Activated B cell treated with CpG ODN at 0.5 μM for 24 hours (primary cell): ENCODE measurements at regions of chr14 and their contacts with region 1.

Region 1: GRCh38 chr14:22886500-22887259 is 3.7 kb downstream of the REM2 start:
- DNase-seq: peak; percentile 71
- ATAC-seq: peak; percentile 55
- H3K4me3 Mint-ChIP-seq: peak overlapping the region; percentile 90
- H3K27ac Mint-ChIP-seq: peak overlapping the region; percentile 97
- H3K4me1 Mint-ChIP-seq: peaks cover 80% of the 10 kb centered on the region
- H3K27me3 Mint-ChIP-seq: no peaks in the 10 kb centered on the region
- CTCF ChIP-seq: no peak

Region 2: GRCh38 chr14:22900081-22900799 is 13.6 kb after region 1 on chr14:
- CTCF ChIA-PET with region 1: interaction called, 49 read pairs
- POLR2A ChIA-PET with region 1: interaction called, 9 read pairs
- intact Hi-C with region 1: loop called (anchors 1 kb)
- DNase-seq: no peak
- ATAC-seq: peak; percentile 91
- H3K4me3 Mint-ChIP-seq: no peak overlapping the region
- H3K27ac Mint-ChIP-seq: peak overlapping the region; percentile 43
- H3K4me1 Mint-ChIP-seq: peaks cover 5% of the 10 kb centered on the region
- H3K27me3 Mint-ChIP-seq: no peaks in the 10 kb centered on the region
- CTCF ChIP-seq: no peak

Region 3: DNA sequence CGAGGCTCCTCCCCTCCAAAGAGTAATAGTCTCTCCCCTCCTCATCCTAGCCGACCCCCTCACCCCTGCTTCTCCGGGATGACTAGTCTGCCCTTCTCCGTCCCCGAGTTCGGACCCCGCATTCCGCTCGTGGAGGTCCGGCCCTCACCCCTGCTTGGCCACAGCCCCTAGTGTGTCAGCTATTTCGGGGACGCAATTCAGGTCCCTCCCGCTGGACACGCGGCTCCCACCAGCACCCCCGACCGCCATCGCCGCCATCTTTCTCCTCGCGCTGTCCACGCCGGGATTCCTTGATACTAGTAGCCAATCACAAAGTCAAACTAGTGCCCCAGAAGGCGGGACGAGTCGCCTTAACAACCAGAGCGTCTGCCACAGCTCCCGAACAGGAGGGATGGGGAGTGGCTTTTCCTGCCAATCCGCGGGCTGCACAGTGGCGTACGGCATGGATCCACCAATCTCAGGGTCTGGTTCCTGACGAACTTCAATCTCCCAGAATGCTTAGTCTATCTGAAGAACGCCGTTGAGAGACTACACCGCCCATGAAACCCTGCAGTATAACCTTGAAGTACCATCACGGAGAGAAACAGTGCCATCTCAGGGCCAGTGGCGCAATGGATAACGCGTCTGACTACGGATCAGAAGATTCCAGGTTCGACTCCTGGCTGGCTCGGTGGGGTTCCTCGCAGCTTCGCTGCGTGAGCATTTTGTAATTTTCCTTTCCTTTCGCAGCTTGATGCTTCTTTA is 42.6 kb after region 1 on chr14 and contains the start of gene PRMT5:
- CTCF ChIA-PET with region 1: no interaction called
- POLR2A ChIA-PET with region 1: interaction called, 4 read pairs
- intact Hi-C with region 1: loop called (anchors 1 kb)
- DNase-seq: peak; percentile 83
- ATAC-seq: peak; percentile 93
- H3K4me3 Mint-ChIP-seq: no peak within 1 kb of the TSS
- H3K27ac Mint-ChIP-seq: no peak within 1 kb of the TSS
- H3K4me1 Mint-ChIP-seq: peaks cover 14% of the 10 kb centered on the region
- H3K27me3 Mint-ChIP-seq: no peaks in the 10 kb centered on the region
- CTCF ChIP-seq: no peak
- total RNA-seq, gene PRMT5: 75.3 and 96.5 TPM in 2 replicates

Region 4: DNA sequence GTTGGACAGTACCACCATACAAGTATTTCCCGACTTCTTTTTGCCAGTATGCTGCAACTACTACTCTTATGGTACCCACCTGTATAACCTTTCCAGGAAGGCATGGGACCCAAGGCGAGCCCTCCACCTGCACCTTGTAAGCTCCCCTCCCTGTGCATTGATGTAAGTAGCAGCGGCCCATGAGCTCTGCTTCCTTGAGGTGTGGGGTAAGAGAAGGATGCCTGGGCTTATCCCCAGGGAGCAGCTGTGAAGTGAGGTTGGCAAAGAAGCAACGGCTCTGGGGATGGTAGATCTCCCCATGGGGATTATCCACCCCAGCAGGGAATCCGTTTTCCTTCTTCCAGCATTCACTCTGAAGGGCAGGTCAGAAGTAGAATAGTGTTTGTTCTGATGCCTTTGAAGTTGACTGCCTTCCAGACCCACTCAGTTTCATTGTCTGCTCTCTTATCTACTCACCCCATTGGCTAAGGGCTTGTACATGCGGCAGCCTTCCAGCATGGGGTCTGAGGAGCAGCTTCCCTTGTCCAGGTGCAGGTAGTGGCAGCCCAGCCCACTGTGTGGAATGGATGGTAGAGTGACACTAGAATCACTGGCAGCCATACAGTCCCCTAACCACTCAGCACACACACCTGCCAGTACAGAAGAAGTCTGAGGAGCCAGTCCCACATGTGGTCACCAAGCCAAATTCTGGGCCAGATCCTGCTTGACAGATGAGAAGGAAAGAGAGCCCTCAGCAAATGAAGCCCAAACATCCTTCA is 214.7 kb after region 1 on chr14:
- CTCF ChIA-PET with region 1: no interaction called
- POLR2A ChIA-PET with region 1: interaction called, 13 read pairs
- intact Hi-C with region 1: no loop called
- DNase-seq: no peak
- ATAC-seq: no peak
- H3K4me3 Mint-ChIP-seq: no peak overlapping the region
- H3K27ac Mint-ChIP-seq: no peak overlapping the region
- H3K4me1 Mint-ChIP-seq: peaks cover 20% of the 10 kb centered on the region
- H3K27me3 Mint-ChIP-seq: no peaks in the 10 kb centered on the region
- CTCF ChIP-seq: no peak

Region 5: GRCh38 chr14:23327947-23328744 is 441.5 kb after region 1 on chr14:
- CTCF ChIA-PET with region 1: no interaction called
- POLR2A ChIA-PET with region 1: no interaction called
- intact Hi-C with region 1: no loop called
- DNase-seq: no peak
- ATAC-seq: peak; percentile 73
- H3K4me3 Mint-ChIP-seq: no peak overlapping the region
- H3K27ac Mint-ChIP-seq: no peak overlapping the region
- H3K4me1 Mint-ChIP-seq: peaks cover 3% of the 10 kb centered on the region
- H3K27me3 Mint-ChIP-seq: no peaks in the 10 kb centered on the region
- CTCF ChIP-seq: peak; percentile 42